Left ventricle myocardium superior (tissue), 1 donor: ENCODE measurements at regions of chr4 and their contacts with region 1.

Region 1: DNA sequence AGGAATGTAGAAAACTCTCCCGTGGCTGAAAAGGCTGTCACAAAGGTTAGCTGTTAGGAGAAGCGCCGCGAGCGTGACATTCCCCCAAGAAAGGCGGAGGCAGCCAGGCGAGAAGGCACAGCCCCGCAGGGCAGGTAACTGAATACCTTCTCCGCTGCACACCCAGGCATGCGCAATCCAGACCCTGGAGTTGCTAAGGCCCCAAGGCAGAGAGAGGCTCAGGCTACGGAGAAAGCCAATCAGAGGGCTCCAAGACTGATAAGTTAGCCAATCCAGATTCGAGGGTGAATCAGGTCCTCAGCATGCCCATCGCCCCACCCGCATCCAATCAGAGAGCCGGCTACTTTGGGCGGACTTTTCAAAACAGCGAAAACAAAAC is 485 bp upstream of the CCNG2 start:
- DNase-seq: peak; percentile 89
- ATAC-seq: peak; percentile 97

Region 2: DNA sequence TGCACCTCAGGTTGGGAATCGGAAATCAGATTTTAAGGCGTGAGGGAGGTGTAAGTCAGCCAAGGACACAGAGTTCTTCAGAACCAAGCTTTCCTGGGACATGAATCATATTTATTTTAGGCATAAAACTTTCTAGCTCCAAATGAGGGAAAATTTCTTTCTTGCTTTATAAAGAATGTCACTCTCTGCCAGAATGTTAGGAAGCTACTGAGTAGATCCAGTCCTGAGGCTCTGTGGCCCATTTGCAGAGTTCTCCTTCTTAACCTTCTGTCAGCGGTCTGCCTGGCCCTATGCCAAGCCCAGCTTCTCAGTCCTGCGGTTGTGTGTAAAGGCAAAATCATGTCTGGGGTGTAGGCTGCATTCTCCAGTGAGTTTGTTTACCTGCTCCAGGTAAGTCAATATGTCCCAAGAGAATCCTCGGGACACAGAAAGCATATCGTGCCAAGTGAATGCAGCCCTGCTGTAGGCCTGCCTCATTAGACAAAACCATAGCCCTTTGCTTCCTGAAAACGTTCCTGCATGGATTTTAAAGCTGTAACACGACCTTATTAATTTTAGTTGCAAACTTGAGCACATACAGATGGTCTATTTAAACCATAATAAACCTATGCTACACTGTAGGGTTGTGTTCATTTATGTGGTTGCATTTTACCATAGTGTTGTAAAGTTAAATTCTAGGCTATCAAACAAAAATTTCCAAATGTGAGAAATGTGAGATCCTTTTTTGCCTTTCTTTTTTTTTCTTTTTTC is 51.6 kb before region 1 on chr4:
- intact Hi-C with region 1: loop called (anchors 10 kb)
- DNase-seq: peak; percentile 76
- ATAC-seq: peak; percentile 76